A549 (cell line): ENCODE measurements at regions of chr15 and their contacts with region 1.

Region 1: GRCh38 chr15:100849252-100850171 is 30.1 kb upstream of the ALDH1A3 start:
- DNase-seq: peak; percentile 82 to 96
- ATAC-seq: peak; percentile 98 to 99
- H3K4me3 ChIP-seq: peak overlapping the region; percentile 70
- H3K27ac ChIP-seq: peak overlapping the region; percentile 82 to 90
- H3K4me1 ChIP-seq: 0 out of 3 replicates have a peak, but pooled peaks cover 3% of the 10 kb centered on the region
- CTCF ChIP-seq: peak; percentile 63
- EP300 ChIP-seq: no peak
- POLR2A ChIP-seq: peak; percentile 77
- RAD21 ChIP-seq: peak; percentile 51 to 65

Region 2: GRCh38 chr15:100818927-100819326 is 30.6 kb before region 1 on chr15:
- CTCF ChIA-PET with region 1: no interaction called
- POLR2A ChIA-PET with region 1: no interaction called
- DNase-seq: peak in 1 of 2 experiments; percentile 42
- ATAC-seq: peak in 1 of 2 experiments; percentile 61; a peak in 3 of 6 replicates
- H3K4me3 ChIP-seq: no peak overlapping the region
- H3K27ac ChIP-seq: no peak overlapping the region
- H3K4me1 ChIP-seq: 0 out of 3 replicates have a peak, but pooled peaks cover 2% of the 10 kb centered on the region
- CTCF ChIP-seq: no peak
- EP300 ChIP-seq: no peak
- POLR2A ChIP-seq: no peak
- RAD21 ChIP-seq: no peak

Region 3: GRCh38 chr15:100863796-100864267 is 14.3 kb after region 1 on chr15:
- CTCF ChIA-PET with region 1: interaction called, 14 read pairs
- POLR2A ChIA-PET with region 1: no interaction called
- DNase-seq: no peak
- ATAC-seq: no peak
- H3K4me3 ChIP-seq: no peak overlapping the region
- H3K27ac ChIP-seq: no peak overlapping the region
- H3K4me1 ChIP-seq: peaks cover 7% of the 10 kb centered on the region; the same call in 2 of the 3 replicates
- CTCF ChIP-seq: no peak
- EP300 ChIP-seq: no peak
- POLR2A ChIP-seq: no peak
- RAD21 ChIP-seq: no peak